ENCODE measurements at regions of chr15 and their contacts with region 1.

Region 1: GRCh38 chr15:63048115-63048775 is 5.7 kb downstream of the TPM1 start:
- DNase-seq: peak; percentile 92
- ATAC-seq: peak; percentile 86
- H3K4me3 ChIP-seq: peak overlapping the region in 4 of 5 experiments; percentile 56 to 83 (median 74)
- H3K4me3 Mint-ChIP-seq: peak overlapping the region; percentile 96
- H3K27ac ChIP-seq: no peak overlapping the region
- H3K27ac Mint-ChIP-seq: peak overlapping the region; percentile 86
- H3K4me1 ChIP-seq: peaks cover 21 to 27% of the 10 kb centered on the region in 2 donors
- H3K4me1 Mint-ChIP-seq: peaks cover 31% of the 10 kb centered on the region
- H3K27me3 ChIP-seq: peaks cover 0 to 39% (median 34%) of the 10 kb centered on the region in 4 experiments
- H3K27me3 Mint-ChIP-seq: peaks cover 27% of the 10 kb centered on the region
- CTCF ChIP-seq: peak; percentile 97

Region 2: DNA sequence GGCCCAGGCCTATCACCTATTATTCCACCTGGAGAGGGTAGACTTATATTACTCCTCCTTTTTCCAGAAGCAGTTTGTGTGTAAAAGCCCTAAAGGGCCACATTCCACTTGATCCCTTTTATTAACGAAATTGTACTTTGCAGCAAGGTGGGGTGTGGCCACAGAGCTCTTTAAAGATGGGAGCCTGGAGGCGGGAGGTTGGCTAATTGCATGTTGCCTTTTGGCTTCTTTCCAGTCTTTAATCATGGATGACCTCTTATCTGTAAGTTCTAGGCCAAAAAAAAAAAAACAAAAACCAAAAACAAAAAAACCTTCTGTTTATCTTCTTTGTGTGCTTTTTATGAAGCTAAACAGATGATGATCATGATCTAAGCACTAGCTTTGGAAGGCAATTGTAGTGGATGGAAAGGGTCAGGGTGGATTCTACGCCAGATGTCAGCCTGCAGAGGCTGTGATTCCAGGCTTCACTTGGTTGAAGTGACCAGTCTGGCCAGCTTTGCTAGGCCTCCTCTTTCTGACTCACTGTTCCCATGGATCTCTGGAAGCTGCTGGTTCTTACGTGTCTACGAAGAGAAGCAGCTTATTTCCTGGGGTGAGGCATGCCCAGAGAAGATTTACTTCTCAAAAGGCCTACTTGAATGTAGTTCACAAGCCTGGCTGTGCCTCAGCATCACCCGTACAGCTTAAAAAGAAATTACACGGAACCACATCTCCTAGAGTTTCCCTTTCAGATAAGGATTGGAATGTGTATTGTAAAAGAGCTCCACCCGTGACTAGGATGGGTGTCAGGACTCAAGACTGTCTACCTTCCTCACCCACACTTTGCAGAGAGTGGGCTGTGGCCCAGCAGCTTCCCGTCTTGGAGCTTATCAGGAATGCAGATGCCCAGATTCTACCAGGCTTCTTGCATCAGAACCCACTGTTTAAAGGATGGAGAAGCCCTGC is 552.3 kb before region 1 on chr15:
- CTCF ChIA-PET with region 1: no interaction called
- POLR2A ChIA-PET with region 1: no interaction called
- intact Hi-C with region 1: no loop called
- DNase-seq: no peak
- ATAC-seq: no peak
- H3K4me3 ChIP-seq: no peak overlapping the region
- H3K4me3 Mint-ChIP-seq: no peak overlapping the region
- H3K27ac ChIP-seq: no peak overlapping the region
- H3K27ac Mint-ChIP-seq: no peak overlapping the region
- H3K4me1 ChIP-seq: no peaks in the 10 kb centered on the region
- H3K4me1 Mint-ChIP-seq: no peaks in the 10 kb centered on the region
- H3K27me3 ChIP-seq: no peaks in the 10 kb centered on the region
- H3K27me3 Mint-ChIP-seq: no peaks in the 10 kb centered on the region
- CTCF ChIP-seq: no peak

Region 3: GRCh38 chr15:63027646-63028045 is 20.6 kb before region 1 on chr15:
- CTCF ChIA-PET with region 1: interaction called, 10 read pairs
- POLR2A ChIA-PET with region 1: no interaction called
- intact Hi-C with region 1: no loop called
- DNase-seq: no peak
- ATAC-seq: no peak
- H3K4me3 ChIP-seq: no peak overlapping the region
- H3K4me3 Mint-ChIP-seq: no peak overlapping the region
- H3K27ac ChIP-seq: no peak overlapping the region
- H3K27ac Mint-ChIP-seq: no peak overlapping the region
- H3K4me1 ChIP-seq: peaks cover 0 to 6% of the 10 kb centered on the region in 2 donors
- H3K4me1 Mint-ChIP-seq: peaks cover 6% of the 10 kb centered on the region
- H3K27me3 ChIP-seq: peaks cover 0 to 23% (median 2%) of the 10 kb centered on the region in 4 experiments
- H3K27me3 Mint-ChIP-seq: peaks cover 53% of the 10 kb centered on the region
- CTCF ChIP-seq: no peak

Region 4: GRCh38 chr15:63093486-63094205 is 45.4 kb after region 1 on chr15:
- CTCF ChIA-PET with region 1: interaction called, 67 read pairs
- POLR2A ChIA-PET with region 1: no interaction called
- intact Hi-C with region 1: loop called (anchors 1 kb)
- DNase-seq: peak; percentile 72
- ATAC-seq: peak; percentile 75
- H3K4me3 ChIP-seq: no peak overlapping the region
- H3K4me3 Mint-ChIP-seq: no peak overlapping the region
- H3K27ac ChIP-seq: no peak overlapping the region
- H3K27ac Mint-ChIP-seq: no peak overlapping the region
- H3K4me1 ChIP-seq: peaks cover 0 to 4% of the 10 kb centered on the region in 2 donors
- H3K4me1 Mint-ChIP-seq: peaks cover 2% of the 10 kb centered on the region
- H3K27me3 ChIP-seq: no peaks in the 10 kb centered on the region
- H3K27me3 Mint-ChIP-seq: no peaks in the 10 kb centered on the region
- CTCF ChIP-seq: peak; percentile 79

Region 5: GRCh38 chr15:63122002-63122893 is 74.0 kb after region 1 on chr15:
- CTCF ChIA-PET with region 1: interaction called, 5 read pairs
- POLR2A ChIA-PET with region 1: no interaction called
- intact Hi-C with region 1: loop called (anchors 1 kb)
- DNase-seq: peak; percentile 87
- ATAC-seq: peak; percentile 87
- H3K4me3 ChIP-seq: peak overlapping the region; percentile 66 to 95 (median 88)
- H3K4me3 Mint-ChIP-seq: peak overlapping the region; percentile 86
- H3K27ac ChIP-seq: peak overlapping the region; percentile 71 to 85
- H3K27ac Mint-ChIP-seq: peak overlapping the region; percentile 93
- H3K4me1 ChIP-seq: peaks cover 6 to 9% of the 10 kb centered on the region in 2 donors
- H3K4me1 Mint-ChIP-seq: peaks cover 14% of the 10 kb centered on the region
- H3K27me3 ChIP-seq: no peaks in the 10 kb centered on the region
- H3K27me3 Mint-ChIP-seq: no peaks in the 10 kb centered on the region
- CTCF ChIP-seq: peak; percentile 12

Region 6: DNA sequence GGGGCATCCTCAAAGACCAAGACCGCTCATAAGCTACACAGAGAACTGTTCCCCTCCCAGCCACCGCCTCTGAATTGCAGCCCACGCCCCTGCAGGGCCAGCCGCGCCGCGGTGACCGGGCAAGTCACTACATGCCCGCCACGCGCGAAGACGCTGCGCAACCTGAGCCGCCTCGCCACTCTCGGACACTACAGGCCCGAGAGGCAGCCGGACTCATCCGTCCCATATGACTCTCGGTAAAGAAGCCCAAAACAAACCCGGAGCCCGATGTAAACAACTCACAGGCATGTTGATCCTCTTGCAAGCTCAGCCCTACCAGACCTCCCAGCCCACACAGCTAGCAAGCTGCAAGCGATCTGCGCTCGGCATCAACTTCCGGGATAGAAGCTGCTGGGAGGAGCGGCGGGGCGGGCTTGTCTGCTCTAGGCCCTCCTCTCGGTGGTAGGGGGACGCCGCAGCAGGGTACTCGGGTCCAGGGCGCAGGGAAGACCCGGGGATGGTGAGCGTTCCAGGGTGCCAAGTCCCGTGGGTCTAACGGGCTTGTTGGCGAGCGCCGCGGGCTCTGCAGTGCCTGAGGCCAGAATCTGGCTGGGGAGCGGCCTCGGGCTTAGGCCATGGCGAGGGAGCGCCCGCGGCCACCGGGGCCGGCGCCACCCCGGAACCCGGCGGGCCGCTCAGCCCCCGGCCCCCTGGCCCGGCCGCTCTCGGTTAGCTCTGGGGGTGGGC is 109.0 kb after region 1 on chr15 and contains the start of gene RPS27L:
- CTCF ChIA-PET with region 1: interaction called, 5 read pairs
- POLR2A ChIA-PET with region 1: no interaction called
- intact Hi-C with region 1: loop called (anchors 1 kb)
- DNase-seq: peak; percentile 90
- ATAC-seq: peak; percentile 96
- H3K4me3 ChIP-seq: peak within 1 kb of the TSS; percentile 83 to 95 (median 88)
- H3K4me3 Mint-ChIP-seq: peak within 1 kb of the TSS; percentile 96
- H3K27ac ChIP-seq: peak within 1 kb of the TSS; percentile 68 to 81
- H3K27ac Mint-ChIP-seq: peak within 1 kb of the TSS; percentile 99
- H3K4me1 ChIP-seq: peaks cover 14 to 17% of the 10 kb centered on the region in 2 donors
- H3K4me1 Mint-ChIP-seq: peaks cover 28% of the 10 kb centered on the region
- H3K27me3 ChIP-seq: no peaks in the 10 kb centered on the region
- H3K27me3 Mint-ChIP-seq: no peaks in the 10 kb centered on the region
- CTCF ChIP-seq: no peak
- total RNA-seq, gene RPS27L: 49.4 and 50.9 TPM in 2 replicates

Region 7: GRCh38 chr15:63277038-63277892 is 229.0 kb after region 1 on chr15 and contains the start of gene APH1B:
- CTCF ChIA-PET with region 1: interaction called, 4 read pairs
- POLR2A ChIA-PET with region 1: no interaction called
- intact Hi-C with region 1: loop called (anchors 5 kb)
- DNase-seq: peak; percentile 85
- ATAC-seq: peak; percentile 97
- H3K4me3 ChIP-seq: peak within 1 kb of the TSS; percentile 74 to 98 (median 94)
- H3K4me3 Mint-ChIP-seq: peak within 1 kb of the TSS; percentile 92
- H3K27ac ChIP-seq: peak within 1 kb of the TSS; percentile 67 to 79
- H3K27ac Mint-ChIP-seq: peak within 1 kb of the TSS; percentile 94
- H3K4me1 ChIP-seq: peaks cover 12 to 14% of the 10 kb centered on the region in 2 donors
- H3K4me1 Mint-ChIP-seq: peaks cover 19% of the 10 kb centered on the region
- H3K27me3 ChIP-seq: no peaks in the 10 kb centered on the region
- H3K27me3 Mint-ChIP-seq: no peaks in the 10 kb centered on the region
- CTCF ChIP-seq: no peak
- total RNA-seq, gene APH1B: 45.2 and 47.0 TPM in 2 replicates

Region 8: GRCh38 chr15:63402498-63403253 is 354.4 kb after region 1 on chr15:
- CTCF ChIA-PET with region 1: interaction called, 26 read pairs
- POLR2A ChIA-PET with region 1: no interaction called
- intact Hi-C with region 1: loop called (anchors 1 kb)
- DNase-seq: peak; percentile 55
- ATAC-seq: peak; percentile 36
- H3K4me3 ChIP-seq: no peak overlapping the region
- H3K4me3 Mint-ChIP-seq: no peak overlapping the region
- H3K27ac ChIP-seq: no peak overlapping the region
- H3K27ac Mint-ChIP-seq: no peak overlapping the region
- H3K4me1 ChIP-seq: peaks cover 0 to 4% of the 10 kb centered on the region in 2 donors
- H3K4me1 Mint-ChIP-seq: peaks cover 11% of the 10 kb centered on the region
- H3K27me3 ChIP-seq: no peaks in the 10 kb centered on the region
- H3K27me3 Mint-ChIP-seq: peaks cover 5% of the 10 kb centered on the region
- CTCF ChIP-seq: peak; percentile 70

Measured in B cell (primary cell).